ENCODE measurements at regions of chr4 and their contacts with region 1.

Region 1: GRCh38 chr4:73917081-73917501 is 47.9 kb downstream of the CXCL1 start:
- DNase-seq: peak; percentile 92
- H3K4me3 Mint-ChIP-seq: no peak overlapping the region
- H3K27ac Mint-ChIP-seq: peak overlapping the region; percentile 78
- H3K4me1 Mint-ChIP-seq: peaks cover 40% of the 10 kb centered on the region
- H3K27me3 Mint-ChIP-seq: no peaks in the 10 kb centered on the region
- CTCF ChIP-seq: no peak

Region 2: GRCh38 chr4:73869130-73870050 is 47.7 kb before region 1 on chr4 and contains the start of gene CXCL1:
- CTCF ChIA-PET with region 1: interaction called, 30 read pairs
- POLR2A ChIA-PET with region 1: interaction called, 61 read pairs
- intact Hi-C with region 1: loop called (anchors 1 kb)
- DNase-seq: peak; percentile 74
- H3K4me3 Mint-ChIP-seq: peak within 1 kb of the TSS; percentile 95
- H3K27ac Mint-ChIP-seq: peak within 1 kb of the TSS; percentile 92
- H3K4me1 Mint-ChIP-seq: peaks cover 37% of the 10 kb centered on the region
- H3K27me3 Mint-ChIP-seq: no peaks in the 10 kb centered on the region
- CTCF ChIP-seq: no peak
- total RNA-seq, gene CXCL1: 35.0 and 49.3 TPM in 2 replicates

Region 3: GRCh38 chr4:73891739-73892405 is 25.2 kb before region 1 on chr4:
- CTCF ChIA-PET with region 1: interaction called, 3 read pairs
- POLR2A ChIA-PET with region 1: interaction called, 10 read pairs
- intact Hi-C with region 1: no loop called
- DNase-seq: peak; percentile 76
- H3K4me3 Mint-ChIP-seq: peak overlapping the region; percentile 5
- H3K27ac Mint-ChIP-seq: peak overlapping the region; percentile 71
- H3K4me1 Mint-ChIP-seq: peaks cover 45% of the 10 kb centered on the region
- H3K27me3 Mint-ChIP-seq: no peaks in the 10 kb centered on the region
- CTCF ChIP-seq: no peak

Measured in MCF 10A (cell line).